ENCODE measurements at regions of chr9 and their contacts with region 1.

Region 1: DNA sequence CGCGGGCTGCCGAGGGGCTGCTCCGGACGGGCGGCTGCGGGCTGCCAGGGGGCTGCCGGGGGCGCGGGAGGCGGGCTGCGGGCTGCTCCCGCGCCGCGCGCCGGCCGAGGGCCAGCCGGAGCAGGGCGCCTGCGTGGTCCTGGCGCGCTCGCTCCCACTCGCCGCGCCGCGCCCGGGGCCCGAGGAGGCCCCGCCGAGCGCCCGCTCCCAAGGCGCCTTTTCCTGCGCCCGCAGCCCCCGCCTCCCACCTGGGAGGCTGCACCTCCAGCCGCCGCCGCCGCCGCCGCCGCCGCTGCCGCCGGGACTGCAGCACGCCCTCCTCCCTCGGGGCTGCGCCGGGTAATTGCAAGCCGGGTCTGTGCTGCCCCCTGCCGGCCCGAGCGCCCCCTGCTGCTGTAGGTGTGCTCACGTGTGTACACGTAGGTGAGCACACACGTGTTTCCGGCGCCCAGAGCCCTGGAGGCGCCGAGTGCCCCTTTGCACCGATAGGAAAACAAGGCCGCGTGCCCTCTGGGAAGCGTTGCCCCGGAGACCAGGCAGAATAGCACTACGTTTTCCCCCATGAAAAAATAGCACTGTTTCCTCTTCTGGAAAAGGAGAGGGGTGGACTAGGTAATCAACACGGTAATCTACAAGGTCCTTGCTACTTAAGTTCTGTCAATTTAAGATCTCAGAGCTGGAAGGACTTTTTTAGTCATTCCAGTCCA is at the start of gene EPB41L4B:
- DNase-seq: peak; percentile 91
- H3K4me3 ChIP-seq: peak within 1 kb of the TSS; percentile 55 to 74
- H3K27ac ChIP-seq: no peak within 1 kb of the TSS; a peak in 1 of 4 replicates
- H3K4me1 ChIP-seq: peaks cover 0 to 24% of the 10 kb centered on the region in 2 experiments; a peak in 1 of 4 replicates
- H3K27me3 ChIP-seq: peaks cover 6% of the 10 kb centered on the region; the same call in 1 of the 2 replicates
- CTCF ChIP-seq: peak; percentile 92
- EP300 ChIP-seq: 0 out of 4 replicates have a peak, but pooled peaks of 1 of the 2 experiments have one; percentile 42
- RAD21 ChIP-seq: peak; percentile 82
- polyA plus RNA-seq, gene EPB41L4B: 0.59 and 0.84 TPM in 2 replicates

Region 2: GRCh38 chr9:109182940-109183798 is 137.7 kb before region 1 on chr9:
- CTCF ChIA-PET with region 1: interaction called, 16 read pairs
- POLR2A ChIA-PET with region 1: no interaction called
- DNase-seq: peak; percentile 62
- H3K4me3 ChIP-seq: no peak overlapping the region
- H3K27ac ChIP-seq: no peak overlapping the region
- H3K4me1 ChIP-seq: peaks cover 0 to 1% of the 10 kb centered on the region in 2 experiments; a peak in 1 of 4 replicates
- H3K27me3 ChIP-seq: no peaks in the 10 kb centered on the region
- CTCF ChIP-seq: peak; percentile 56
- EP300 ChIP-seq: no peak
- RAD21 ChIP-seq: peak; percentile 51

Region 3: DNA sequence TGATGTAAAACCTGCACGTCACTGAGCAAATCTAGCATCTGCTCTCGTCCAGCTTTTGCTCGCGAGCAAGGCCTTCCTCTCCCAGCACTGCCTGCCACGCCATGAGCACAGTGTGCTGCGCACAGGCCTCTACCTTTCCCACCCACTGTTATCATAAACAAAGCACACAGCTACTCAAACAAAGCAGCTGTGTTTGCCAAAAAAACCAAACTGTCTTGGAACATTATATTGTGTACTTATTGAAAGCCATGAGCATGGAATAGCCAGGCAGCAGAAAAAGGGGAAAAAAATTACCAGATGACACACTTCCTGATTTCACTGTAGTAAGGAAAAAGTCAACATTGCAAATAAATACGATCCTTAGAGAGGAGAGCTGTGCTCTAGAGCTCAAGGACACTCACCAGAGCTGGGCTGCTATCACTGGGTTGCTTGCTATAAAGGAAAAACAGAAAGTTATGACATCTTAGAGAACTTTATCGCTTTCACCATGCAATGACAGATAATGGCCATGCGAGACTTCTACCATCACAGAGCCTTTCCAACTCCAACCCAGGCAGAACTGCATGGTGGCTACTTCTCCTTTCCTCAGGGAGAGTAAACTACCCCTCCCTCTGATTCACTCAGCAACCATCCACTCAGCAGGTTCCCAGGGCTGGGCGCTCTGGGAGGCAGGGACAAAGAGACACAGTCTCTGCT is 69.7 kb before region 1 on chr9:
- CTCF ChIA-PET with region 1: interaction called, 30 read pairs
- POLR2A ChIA-PET with region 1: no interaction called
- DNase-seq: no peak
- H3K4me3 ChIP-seq: no peak overlapping the region
- H3K27ac ChIP-seq: peak overlapping the region in 1 of 2 experiments; percentile 23; a peak in 2 of 4 replicates
- H3K4me1 ChIP-seq: peaks cover 0 to 6% of the 10 kb centered on the region in 2 experiments; a peak in 2 of 4 replicates
- H3K27me3 ChIP-seq: no peaks in the 10 kb centered on the region
- CTCF ChIP-seq: no peak
- EP300 ChIP-seq: no peak
- RAD21 ChIP-seq: no peak

Region 4: DNA sequence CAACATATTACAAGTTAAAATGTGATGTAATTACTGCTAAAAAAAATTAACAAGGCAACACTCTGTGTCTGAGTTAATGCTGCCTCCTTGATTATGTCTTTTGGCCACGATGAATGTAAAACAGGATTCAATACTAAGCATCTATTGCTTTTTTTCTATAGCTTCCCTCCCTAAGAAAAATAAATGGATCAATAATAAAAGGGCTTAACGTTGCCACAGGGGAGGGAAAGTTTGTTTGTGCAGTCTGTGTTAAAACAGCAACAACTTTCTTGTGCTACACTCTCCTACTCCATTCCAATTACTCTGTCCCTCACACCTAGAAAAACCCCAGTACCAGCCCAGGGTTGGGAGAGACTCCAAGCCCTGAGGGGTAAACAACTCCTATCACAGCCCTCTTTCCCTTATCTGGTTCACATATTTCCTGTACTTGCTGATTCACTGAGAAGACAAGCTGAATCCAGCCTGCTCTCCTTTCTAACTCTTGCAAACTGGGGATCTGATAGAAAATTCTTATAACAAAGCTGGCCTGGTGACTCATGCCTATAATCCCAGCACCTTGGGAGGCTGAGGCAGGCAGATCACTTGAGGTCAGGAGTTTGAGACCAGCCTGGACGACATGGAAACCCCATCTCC is 132.4 kb after region 1 on chr9:
- CTCF ChIA-PET with region 1: no interaction called
- POLR2A ChIA-PET with region 1: no interaction called
- DNase-seq: peak; percentile 64
- H3K4me3 ChIP-seq: no peak overlapping the region
- H3K27ac ChIP-seq: peak overlapping the region in 1 of 2 experiments; percentile 52; a peak in 2 of 4 replicates
- H3K4me1 ChIP-seq: peaks cover 3 to 37% of the 10 kb centered on the region in 2 experiments; a peak in 2 of 4 replicates
- H3K27me3 ChIP-seq: no peaks in the 10 kb centered on the region
- CTCF ChIP-seq: no peak
- EP300 ChIP-seq: peak; percentile 26 to 77; a peak in 3 of 4 replicates
- RAD21 ChIP-seq: no peak